PC-9 (cell line): ENCODE measurements at regions of chr7 and their contacts with region 1.

Region 1: GRCh38 chr7:98878365-98879165 is at the start of gene TRRAP:
- DNase-seq: peak in 1 of 2 experiments; percentile 76
- H3K4me3 ChIP-seq: peak within 1 kb of the TSS; percentile 99
- H3K27ac ChIP-seq: peak within 1 kb of the TSS; percentile 16; the same call in 1 of the 2 replicates
- H3K4me1 ChIP-seq: peaks cover 13% of the 10 kb centered on the region; the same call in 1 of the 2 replicates
- H3K27me3 ChIP-seq: no peaks in the 10 kb centered on the region
- CTCF ChIP-seq: peak; percentile 84; the same call in 1 of the 2 replicates
- total RNA-seq, gene TRRAP: 46.8 and 55.8 TPM in 2 replicates

Region 2: DNA sequence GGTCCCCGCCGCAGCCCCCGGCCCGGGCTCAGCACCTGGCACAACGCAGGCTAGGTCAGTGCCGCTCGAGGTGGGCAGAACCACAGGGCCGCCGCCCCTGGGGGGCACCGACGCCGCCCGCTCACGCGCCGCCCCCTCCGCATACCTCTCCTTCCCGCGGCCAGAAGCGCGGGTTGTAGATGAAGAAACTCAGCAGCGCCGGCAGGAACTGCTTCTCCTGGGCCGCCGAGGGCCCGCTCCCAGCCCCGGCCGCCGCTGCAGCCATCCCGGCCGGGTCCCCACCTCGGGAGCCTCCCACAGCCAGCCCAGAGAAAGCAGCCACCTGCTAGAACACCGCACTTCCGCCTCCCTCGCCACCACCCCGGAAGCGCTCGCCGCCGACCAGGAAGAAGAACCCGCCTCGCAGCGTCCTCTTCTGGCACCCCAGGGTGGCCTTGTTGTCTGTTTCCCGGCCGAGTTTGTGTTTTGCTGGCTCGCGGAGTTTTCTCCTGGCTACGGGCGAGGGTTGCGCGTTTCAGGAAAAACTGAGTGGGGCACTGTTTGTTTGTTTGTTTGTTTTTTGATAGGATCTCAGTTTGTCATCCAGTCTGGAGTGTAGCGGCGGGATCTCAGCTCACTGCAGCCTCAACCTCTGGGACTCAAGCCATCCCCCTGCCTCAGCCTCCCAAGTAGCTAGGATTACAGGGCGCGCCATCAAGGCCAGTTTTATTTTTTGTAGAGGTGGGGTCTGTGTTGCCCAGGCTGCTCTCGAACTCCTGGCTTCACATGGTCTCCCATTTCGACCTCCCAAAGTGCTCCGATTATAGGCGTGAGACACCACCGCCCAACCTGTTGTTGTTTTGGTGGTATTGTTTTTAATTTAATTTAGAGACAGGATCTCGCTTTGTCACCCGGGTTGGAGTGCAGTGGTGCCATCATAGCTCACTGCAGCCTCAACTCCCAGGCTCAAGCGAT is 906.3 kb before region 1 on chr7:
- CTCF ChIA-PET with region 1: no interaction called
- POLR2A ChIA-PET with region 1: no interaction called
- intact Hi-C with region 1: no loop called
- DNase-seq: peak; percentile 74 to 82
- H3K4me3 ChIP-seq: peak overlapping the region; percentile 89
- H3K27ac ChIP-seq: peak overlapping the region; percentile 65
- H3K4me1 ChIP-seq: peaks cover 7% of the 10 kb centered on the region; the same call in 1 of the 2 replicates
- H3K27me3 ChIP-seq: no peaks in the 10 kb centered on the region
- CTCF ChIP-seq: no peak; the same call in 1 of the 2 replicates

Region 3: GRCh38 chr7:98354511-98355257 is 523.9 kb before region 1 on chr7:
- CTCF ChIA-PET with region 1: interaction called, 4 read pairs
- POLR2A ChIA-PET with region 1: no interaction called
- intact Hi-C with region 1: loop called (anchors 10 kb)
- DNase-seq: peak; percentile 96 to 97
- H3K4me3 ChIP-seq: peak overlapping the region; percentile 52
- H3K27ac ChIP-seq: peak overlapping the region; percentile 94
- H3K4me1 ChIP-seq: peaks cover 93% of the 10 kb centered on the region
- H3K27me3 ChIP-seq: no peaks in the 10 kb centered on the region
- CTCF ChIP-seq: no peak

Region 4: DNA sequence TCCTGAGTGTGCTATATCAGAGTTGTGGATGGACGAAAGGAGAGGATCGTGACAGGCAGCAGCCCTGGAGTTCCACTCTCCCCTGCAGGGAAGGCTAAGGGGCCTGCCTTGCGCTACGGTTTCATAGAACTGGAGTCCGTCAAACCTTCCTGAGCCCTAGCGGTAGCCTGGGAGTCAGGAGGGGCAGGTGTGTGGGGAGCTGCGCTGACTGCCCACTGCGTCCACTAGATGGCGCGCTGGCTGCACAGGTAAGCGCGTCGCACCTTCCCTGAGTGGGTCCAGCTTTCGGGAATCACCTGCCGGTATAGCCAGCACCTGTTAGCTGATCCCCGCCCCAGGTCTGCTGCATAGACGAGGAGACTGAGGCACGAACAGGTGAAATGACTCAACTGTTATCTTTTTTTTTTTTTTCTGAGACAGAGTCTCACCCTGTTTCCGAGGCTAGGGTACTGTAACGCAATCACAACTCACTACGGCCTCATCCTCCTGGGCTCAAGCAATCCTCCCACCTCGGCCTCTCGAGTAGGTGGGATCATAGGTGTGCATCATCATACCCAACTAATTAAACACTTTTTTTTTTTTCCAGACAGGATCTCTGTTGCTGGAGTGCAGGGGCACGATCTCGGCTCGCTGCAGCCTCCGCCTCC is 457.5 kb before region 1 on chr7:
- CTCF ChIA-PET with region 1: no interaction called
- POLR2A ChIA-PET with region 1: interaction called, 18 read pairs
- intact Hi-C with region 1: no loop called
- DNase-seq: peak; percentile 69 to 88
- H3K4me3 ChIP-seq: peak overlapping the region; percentile 6; the same call in 1 of the 2 replicates
- H3K27ac ChIP-seq: no peak overlapping the region
- H3K4me1 ChIP-seq: peaks cover 44% of the 10 kb centered on the region
- H3K27me3 ChIP-seq: no peaks in the 10 kb centered on the region
- CTCF ChIP-seq: peak; percentile 94

Region 5: DNA sequence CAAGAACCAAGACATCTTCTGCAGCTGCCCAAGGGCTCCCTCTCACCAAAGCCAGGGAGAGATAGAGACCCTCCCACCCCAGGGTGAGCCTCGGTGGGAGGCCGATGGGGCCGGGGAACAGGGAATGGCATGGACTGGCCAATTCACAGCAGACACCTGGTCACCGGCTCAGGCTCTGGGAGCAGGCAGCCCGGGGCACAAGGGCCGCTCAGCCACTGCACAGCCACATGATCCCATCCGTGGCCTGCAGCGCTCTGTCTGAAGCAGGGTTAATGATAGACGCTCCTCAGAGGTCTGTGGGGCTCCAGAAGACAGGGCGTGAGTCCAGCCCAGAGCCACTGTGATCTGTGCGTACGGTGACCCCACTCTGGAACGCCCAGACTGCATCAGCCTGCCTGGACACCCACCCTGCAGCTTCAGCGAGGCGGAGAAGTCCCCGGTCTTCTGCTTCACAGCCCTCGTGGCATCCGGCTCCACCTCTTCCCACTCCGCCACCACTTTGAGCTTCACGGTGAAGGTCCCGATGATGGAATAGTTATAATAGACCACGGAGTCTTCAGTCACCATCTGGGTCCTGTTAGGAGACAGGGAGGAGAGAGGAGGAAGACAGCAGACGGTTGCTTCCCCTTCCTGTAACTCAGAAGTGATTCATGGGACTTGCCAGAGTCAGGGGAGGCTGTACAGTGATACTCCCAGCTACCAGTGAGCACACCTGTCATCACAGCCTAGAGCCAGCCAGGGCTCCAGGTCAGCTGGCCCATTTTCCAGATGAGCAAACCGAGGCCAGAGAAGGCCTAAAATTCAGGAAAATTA is 22.7 kb before region 1 on chr7:
- CTCF ChIA-PET with region 1: no interaction called
- POLR2A ChIA-PET with region 1: no interaction called
- intact Hi-C with region 1: no loop called
- DNase-seq: no peak
- H3K4me3 ChIP-seq: no peak overlapping the region
- H3K27ac ChIP-seq: no peak overlapping the region
- H3K4me1 ChIP-seq: 0 out of 2 replicates have a peak, but pooled peaks cover 5% of the 10 kb centered on the region
- H3K27me3 ChIP-seq: no peaks in the 10 kb centered on the region
- CTCF ChIP-seq: no peak

Region 6: DNA sequence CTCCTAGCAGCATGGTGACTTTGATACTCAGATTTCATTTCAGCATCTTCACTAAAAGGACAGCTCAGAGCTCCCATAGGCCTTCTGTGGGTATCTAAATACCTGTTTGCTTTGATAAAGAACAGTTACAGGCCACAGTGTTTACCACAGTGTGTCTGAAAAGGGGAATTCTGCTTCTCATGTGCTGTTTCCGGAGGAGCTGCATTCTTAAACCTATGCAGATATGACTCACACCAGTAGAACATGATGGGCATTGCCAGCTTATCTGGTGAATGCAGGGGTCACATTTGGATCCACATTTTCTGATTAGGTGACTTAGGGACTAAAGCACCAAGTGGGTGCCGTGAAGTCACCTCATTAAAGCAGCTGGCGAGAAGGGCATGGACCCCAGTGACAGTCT is 52.4 kb after region 1 on chr7:
- CTCF ChIA-PET with region 1: no interaction called
- POLR2A ChIA-PET with region 1: no interaction called
- intact Hi-C with region 1: no loop called
- DNase-seq: no peak
- H3K4me3 ChIP-seq: no peak overlapping the region
- H3K27ac ChIP-seq: no peak overlapping the region
- H3K4me1 ChIP-seq: no peaks in the 10 kb centered on the region
- H3K27me3 ChIP-seq: no peaks in the 10 kb centered on the region
- CTCF ChIP-seq: no peak

Region 7: GRCh38 chr7:98949336-98950044 is 70.9 kb after region 1 on chr7:
- CTCF ChIA-PET with region 1: no interaction called
- POLR2A ChIA-PET with region 1: no interaction called
- intact Hi-C with region 1: loop called (anchors 10 kb)
- DNase-seq: no peak
- H3K4me3 ChIP-seq: no peak overlapping the region
- H3K27ac ChIP-seq: no peak overlapping the region
- H3K4me1 ChIP-seq: no peaks in the 10 kb centered on the region
- H3K27me3 ChIP-seq: no peaks in the 10 kb centered on the region
- CTCF ChIP-seq: no peak

Region 8: DNA sequence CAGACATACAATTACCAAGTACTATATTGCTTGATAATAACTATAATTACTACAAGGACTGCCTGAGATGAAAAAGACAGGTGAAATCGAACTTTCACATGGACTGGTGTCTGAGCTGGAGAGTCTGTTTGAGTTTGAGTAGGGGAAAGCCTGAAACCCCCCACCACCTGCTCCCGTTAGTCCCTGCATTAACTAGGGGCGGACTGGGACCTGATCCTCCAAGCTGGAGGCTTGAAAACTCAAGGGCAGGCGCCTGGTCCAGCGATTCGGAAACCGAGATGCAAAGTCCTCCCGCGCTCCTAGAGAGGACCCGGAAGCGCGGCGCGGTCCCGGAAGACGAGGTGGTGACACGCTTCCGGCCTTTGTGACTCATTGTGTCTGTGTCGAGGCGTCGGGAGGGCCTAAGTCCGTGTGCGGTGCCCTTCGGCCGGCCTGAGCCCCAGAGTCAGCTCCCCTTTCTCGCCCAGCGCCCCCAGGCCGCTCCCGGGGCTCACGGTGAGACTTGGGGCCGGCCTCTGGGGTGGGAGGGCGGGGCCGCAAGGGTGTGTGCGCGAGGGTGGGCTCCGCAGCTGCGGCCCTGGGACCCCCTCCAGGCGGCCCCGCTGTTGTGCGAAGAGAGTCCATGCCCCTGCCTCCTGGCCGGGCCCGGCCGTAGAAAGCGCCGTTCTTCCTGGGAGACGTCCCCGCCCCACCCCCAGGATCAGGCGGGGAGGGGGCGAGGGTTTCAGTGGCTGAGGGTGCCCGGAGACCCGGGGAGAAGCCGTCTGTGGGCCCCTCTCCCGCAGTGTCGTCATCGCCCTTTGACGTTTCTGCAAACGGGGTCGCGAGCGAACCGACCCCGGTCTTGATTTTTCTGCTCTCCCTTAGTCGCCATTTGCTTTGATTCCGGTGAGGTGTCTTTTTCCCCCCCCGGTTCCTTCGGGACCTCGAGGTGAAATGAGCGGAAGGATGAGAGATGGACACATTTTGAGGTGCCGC is 1137.0 kb after region 1 on chr7 and contains the start of gene ZKSCAN1:
- CTCF ChIA-PET with region 1: interaction called, 15 read pairs
- POLR2A ChIA-PET with region 1: no interaction called
- intact Hi-C with region 1: no loop called
- DNase-seq: peak; percentile 79 to 80
- H3K4me3 ChIP-seq: peak within 1 kb of the TSS; percentile 95
- H3K27ac ChIP-seq: peak within 1 kb of the TSS; percentile 67
- H3K4me1 ChIP-seq: peaks cover 13% of the 10 kb centered on the region
- H3K27me3 ChIP-seq: no peaks in the 10 kb centered on the region
- CTCF ChIP-seq: no peak
- total RNA-seq, gene ZKSCAN1: 69.4 and 70.3 TPM in 2 replicates